IMR-90 (cell line): ENCODE measurements at regions of chr1 and their contacts with region 1.

Region 1: DNA sequence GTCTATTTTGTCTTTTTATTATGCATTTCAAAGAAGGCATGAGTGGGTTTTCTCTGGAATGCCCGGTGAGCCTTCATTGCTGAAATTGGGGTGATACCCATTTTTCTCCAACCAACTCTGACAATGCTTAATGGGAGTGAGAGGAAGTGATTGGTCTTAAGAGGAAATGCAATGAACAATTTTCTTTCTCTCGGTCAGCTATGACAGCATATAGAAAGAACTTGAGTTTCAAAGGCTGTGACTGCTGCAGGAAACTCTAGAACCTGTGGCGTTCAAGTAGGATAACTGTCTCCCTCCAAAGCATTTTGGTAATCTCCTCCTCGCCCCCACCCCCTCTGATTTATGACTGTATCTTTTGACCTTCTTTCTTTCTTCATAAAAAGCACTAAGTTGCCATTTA is 155.9 kb downstream of the LYPLAL1 start:
- DNase-seq: peak; percentile 82
- ATAC-seq: peak; percentile 12; the same call in 1 of the 2 replicates
- H3K4me3 ChIP-seq: no peak overlapping the region
- H3K27ac ChIP-seq: no peak overlapping the region
- H3K4me1 ChIP-seq: peaks cover 3% of the 10 kb centered on the region
- H3K27me3 ChIP-seq: no peaks in the 10 kb centered on the region
- CTCF ChIP-seq: no peak
- POLR2A ChIP-seq: no peak
- RAD21 ChIP-seq: no peak

Region 2: DNA sequence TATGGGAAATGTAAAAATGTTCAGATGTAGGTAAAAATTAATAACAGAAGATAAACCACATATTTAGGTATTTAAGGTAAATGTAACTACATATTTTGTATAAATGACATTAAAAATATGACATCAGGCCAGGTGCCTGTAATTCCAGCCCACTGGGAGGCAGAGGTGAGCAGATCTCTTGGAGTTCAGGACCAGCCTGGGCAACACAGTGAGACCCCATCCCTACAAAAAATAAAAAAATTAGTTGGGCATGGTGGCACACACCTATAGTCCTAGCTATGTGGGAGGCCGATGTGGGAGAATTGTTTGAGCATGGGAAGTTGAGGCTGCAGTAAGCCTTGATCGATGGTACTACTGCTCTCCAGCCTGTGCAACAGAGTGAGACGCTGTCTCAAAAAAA is 1481.9 kb before region 1 on chr1:
- CTCF ChIA-PET with region 1: no interaction called
- POLR2A ChIA-PET with region 1: interaction called, 14 read pairs
- dilution Hi-C with region 1: no loop called
- in situ Hi-C with region 1: no loop called
- intact Hi-C with region 1: no loop called
- DNase-seq: no peak
- ATAC-seq: no peak
- H3K4me3 ChIP-seq: no peak overlapping the region
- H3K27ac ChIP-seq: no peak overlapping the region
- H3K4me1 ChIP-seq: no peaks in the 10 kb centered on the region
- H3K27me3 ChIP-seq: no peaks in the 10 kb centered on the region
- CTCF ChIP-seq: no peak
- POLR2A ChIP-seq: no peak
- RAD21 ChIP-seq: no peak

Region 3: GRCh38 chr1:219518168-219518907 is 188.8 kb after region 1 on chr1:
- CTCF ChIA-PET with region 1: no interaction called
- POLR2A ChIA-PET with region 1: no interaction called
- dilution Hi-C with region 1: no loop called
- in situ Hi-C with region 1: no loop called
- intact Hi-C with region 1: no loop called
- DNase-seq: peak; percentile 63
- ATAC-seq: peak; percentile 82
- H3K4me3 ChIP-seq: no peak overlapping the region
- H3K27ac ChIP-seq: no peak overlapping the region
- H3K4me1 ChIP-seq: peaks cover 2% of the 10 kb centered on the region; the same call in 1 of the 2 replicates
- H3K27me3 ChIP-seq: no peaks in the 10 kb centered on the region
- CTCF ChIP-seq: no peak
- POLR2A ChIP-seq: no peak
- RAD21 ChIP-seq: no peak